Activated T-helper 1 cell treated with anti-CD3 and anti-CD28 coated beads, Interleukin-12 subunit alpha, Interleukin-12 subunit beta, Interleukin-2, Interleukin-4 antibody, amounts not matched to agents 30 ng/mL and 10 ng/mL and 1 ng/mL, durations not matched to agents 14 hours and 24 hours and 36 hours (primary cell): ENCODE measurements at regions of chr19 and their contacts with region 1.

Region 1: DNA sequence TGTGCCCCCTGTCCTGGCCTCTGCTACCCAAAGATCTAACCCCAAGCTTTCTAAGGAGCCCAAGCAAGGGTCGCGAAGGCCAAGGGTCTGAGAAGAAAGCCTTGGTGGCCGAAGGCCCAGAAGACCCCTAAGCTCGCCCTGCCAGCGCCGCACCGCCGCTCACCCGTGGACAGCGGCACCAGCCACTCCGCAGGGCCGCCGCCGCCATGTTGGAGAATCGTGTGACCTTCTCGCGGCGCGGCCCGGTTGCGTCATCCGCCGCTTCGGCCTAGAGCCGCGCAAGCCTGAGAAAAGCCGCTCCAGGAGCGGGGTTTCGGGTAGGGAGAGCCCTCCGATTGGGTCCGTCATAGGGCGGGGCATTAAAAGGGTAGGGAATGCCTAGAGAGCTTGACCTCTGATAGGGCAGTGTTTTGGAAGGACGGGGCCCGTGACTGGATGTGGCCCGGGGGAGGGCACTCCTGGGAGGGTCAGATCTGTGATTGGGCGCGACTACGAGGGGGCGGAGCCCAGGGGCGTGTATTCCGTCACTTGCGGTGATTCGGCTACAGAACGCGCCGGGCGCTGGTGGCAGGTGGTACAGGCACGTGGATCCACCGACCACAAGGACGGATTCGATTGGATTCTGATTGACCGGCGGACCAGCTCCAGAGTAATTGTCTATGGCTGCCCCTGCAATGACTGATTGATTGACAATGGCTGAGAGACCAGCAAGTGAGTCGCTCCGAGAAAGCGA is at the start of gene TIMM44:
- DNase-seq: peak; percentile 99
- H3K4me3 Mint-ChIP-seq: peak within 1 kb of the TSS; percentile 87
- H3K27ac Mint-ChIP-seq: peak within 1 kb of the TSS; percentile 98
- H3K4me1 Mint-ChIP-seq: peaks cover 27% of the 10 kb centered on the region
- H3K27me3 Mint-ChIP-seq: no peaks in the 10 kb centered on the region
- total RNA-seq, gene TIMM44: 114 and 120 TPM in 2 replicates

Region 2: DNA sequence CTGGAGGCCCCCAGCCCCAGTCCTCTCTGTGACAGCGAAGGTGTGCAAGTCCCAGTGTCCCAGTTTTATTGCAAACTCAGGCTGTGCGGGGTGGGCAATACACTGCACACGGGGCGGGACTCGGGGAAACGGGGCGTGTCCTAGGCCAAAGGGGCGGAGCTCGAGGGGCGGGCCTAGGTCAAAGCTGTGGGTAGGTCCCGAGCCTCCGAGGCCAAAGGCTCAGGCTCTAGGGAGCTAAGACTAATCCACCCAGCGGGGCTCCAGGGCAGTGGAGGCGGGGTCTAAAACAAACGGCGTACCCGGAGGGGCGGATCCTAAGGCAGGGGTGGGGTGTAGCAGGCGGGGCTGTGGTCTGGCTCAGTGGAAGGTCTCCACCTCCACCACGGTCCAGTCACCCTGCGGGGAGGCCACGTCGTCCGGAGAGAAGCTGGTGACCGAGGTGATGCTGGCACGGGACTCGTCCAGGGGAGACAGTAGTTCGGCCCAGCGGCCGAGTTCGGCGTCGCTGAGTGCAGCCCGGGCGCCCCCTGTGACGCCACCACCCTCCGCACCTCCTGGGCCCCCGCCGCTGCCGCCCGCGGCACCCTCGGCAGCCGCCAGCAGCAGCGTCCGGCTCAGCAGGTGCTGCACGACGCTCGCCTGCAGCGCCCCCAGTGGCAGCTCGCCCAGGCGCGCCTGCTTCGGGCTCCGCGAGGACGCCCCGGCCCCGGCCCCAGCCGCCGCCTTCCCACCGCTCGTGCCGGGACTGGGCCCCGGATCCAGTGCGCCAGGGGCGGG is 74.7 kb before region 1 on chr19:
- intact Hi-C with region 1: loop called (anchors 2 kb)
- DNase-seq: peak; percentile 75
- H3K4me3 Mint-ChIP-seq: peak overlapping the region; percentile 61
- H3K27ac Mint-ChIP-seq: no peak overlapping the region
- H3K4me1 Mint-ChIP-seq: peaks cover 21% of the 10 kb centered on the region
- H3K27me3 Mint-ChIP-seq: peaks cover 44% of the 10 kb centered on the region

Region 3: GRCh38 chr19:7925171-7925851 is 18.3 kb before region 1 on chr19:
- intact Hi-C with region 1: loop called (anchors 1 kb)
- DNase-seq: peak; percentile 71
- H3K4me3 Mint-ChIP-seq: peak overlapping the region; percentile 81
- H3K27ac Mint-ChIP-seq: peak overlapping the region; percentile 78
- H3K4me1 Mint-ChIP-seq: peaks cover 25% of the 10 kb centered on the region
- H3K27me3 Mint-ChIP-seq: peaks cover 4% of the 10 kb centered on the region

Region 4: GRCh38 chr19:7955696-7956095 is 12.1 kb after region 1 on chr19:
- intact Hi-C with region 1: no loop called
- DNase-seq: no peak
- H3K4me3 Mint-ChIP-seq: no peak overlapping the region
- H3K27ac Mint-ChIP-seq: no peak overlapping the region
- H3K4me1 Mint-ChIP-seq: no peaks in the 10 kb centered on the region
- H3K27me3 Mint-ChIP-seq: no peaks in the 10 kb centered on the region

Region 5: DNA sequence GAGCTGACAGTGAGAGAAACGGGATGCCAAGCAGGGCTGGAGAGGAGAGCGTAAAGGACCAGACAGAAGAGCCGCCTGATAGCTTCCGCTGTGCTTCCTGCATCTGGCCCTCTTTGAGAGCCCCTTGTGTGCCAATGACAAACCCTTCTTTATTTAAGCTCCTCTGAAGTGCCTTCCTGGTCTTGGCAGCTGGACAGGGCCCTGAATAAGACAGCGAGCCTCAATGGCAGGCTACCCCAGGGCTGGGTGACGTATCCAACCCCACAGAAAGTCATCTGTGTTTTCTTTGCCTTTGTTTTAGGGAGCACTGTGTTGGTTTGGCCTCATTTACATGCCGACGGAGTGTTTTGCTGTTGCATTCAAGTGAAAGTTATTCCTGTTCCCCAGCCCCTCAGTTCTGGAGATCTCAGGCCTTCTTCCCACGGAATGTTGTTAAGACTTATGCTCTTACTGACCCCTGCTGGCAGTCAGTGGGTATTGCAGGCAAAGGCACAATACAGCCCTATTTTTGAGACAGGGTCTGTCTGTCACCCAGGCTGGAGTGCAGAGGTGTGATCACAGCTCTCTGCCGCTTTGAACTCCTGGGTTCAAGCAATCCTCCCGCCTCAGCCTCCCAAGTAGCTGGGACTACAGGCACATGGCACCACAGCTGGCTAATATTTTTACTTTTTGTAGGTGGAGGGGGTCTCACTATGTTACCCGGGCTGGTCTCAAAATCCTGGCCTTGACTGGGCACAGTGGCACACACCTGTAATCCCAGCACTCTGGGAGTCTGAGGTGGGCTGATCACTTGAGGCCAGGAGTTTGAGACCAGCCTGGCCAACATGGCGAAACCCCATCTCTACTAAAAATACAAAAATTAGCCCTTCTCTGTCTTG is 125.7 kb after region 1 on chr19:
- intact Hi-C with region 1: loop called (anchors 1 kb)
- DNase-seq: no peak
- H3K4me3 Mint-ChIP-seq: no peak overlapping the region
- H3K27ac Mint-ChIP-seq: no peak overlapping the region
- H3K4me1 Mint-ChIP-seq: no peaks in the 10 kb centered on the region
- H3K27me3 Mint-ChIP-seq: no peaks in the 10 kb centered on the region

Region 6: GRCh38 chr19:8307965-8308866 is 364.6 kb after region 1 on chr19 and contains the start of gene CD320:
- intact Hi-C with region 1: loop called (anchors 1 kb)
- DNase-seq: peak; percentile 84
- H3K4me3 Mint-ChIP-seq: peak within 1 kb of the TSS; percentile 89
- H3K27ac Mint-ChIP-seq: peak within 1 kb of the TSS; percentile 81
- H3K4me1 Mint-ChIP-seq: peaks cover 31% of the 10 kb centered on the region
- H3K27me3 Mint-ChIP-seq: no peaks in the 10 kb centered on the region
- total RNA-seq, gene CD320: 122 and 126 TPM in 2 replicates